ENCODE measurements at regions of chr17 and their contacts with region 1.

Region 1: GRCh38 chr17:7466639-7467341 is 12.6 kb downstream of the ZBTB4 start:
- DNase-seq: no peak
- H3K4me3 ChIP-seq: peak overlapping the region in 1 of 3 donors; percentile 20
- H3K27ac ChIP-seq: peak overlapping the region; percentile 67 to 89
- H3K4me1 ChIP-seq: no peaks in the 10 kb centered on the region
- H3K27me3 ChIP-seq: no peaks in the 10 kb centered on the region
- CTCF ChIP-seq: no peak
- POLR2A ChIP-seq: no peak

Region 2: GRCh38 chr17:7493941-7494340 is 27.2 kb after region 1 on chr17:
- intact Hi-C with region 1: loop called (anchors 1 kb)
- DNase-seq: no peak
- H3K4me3 ChIP-seq: no peak overlapping the region
- H3K27ac ChIP-seq: no peak overlapping the region
- H3K4me1 ChIP-seq: peaks cover 2 to 4% of the 10 kb centered on the region in 2 donors
- H3K27me3 ChIP-seq: no peaks in the 10 kb centered on the region
- CTCF ChIP-seq: no peak
- POLR2A ChIP-seq: no peak

Region 3: DNA sequence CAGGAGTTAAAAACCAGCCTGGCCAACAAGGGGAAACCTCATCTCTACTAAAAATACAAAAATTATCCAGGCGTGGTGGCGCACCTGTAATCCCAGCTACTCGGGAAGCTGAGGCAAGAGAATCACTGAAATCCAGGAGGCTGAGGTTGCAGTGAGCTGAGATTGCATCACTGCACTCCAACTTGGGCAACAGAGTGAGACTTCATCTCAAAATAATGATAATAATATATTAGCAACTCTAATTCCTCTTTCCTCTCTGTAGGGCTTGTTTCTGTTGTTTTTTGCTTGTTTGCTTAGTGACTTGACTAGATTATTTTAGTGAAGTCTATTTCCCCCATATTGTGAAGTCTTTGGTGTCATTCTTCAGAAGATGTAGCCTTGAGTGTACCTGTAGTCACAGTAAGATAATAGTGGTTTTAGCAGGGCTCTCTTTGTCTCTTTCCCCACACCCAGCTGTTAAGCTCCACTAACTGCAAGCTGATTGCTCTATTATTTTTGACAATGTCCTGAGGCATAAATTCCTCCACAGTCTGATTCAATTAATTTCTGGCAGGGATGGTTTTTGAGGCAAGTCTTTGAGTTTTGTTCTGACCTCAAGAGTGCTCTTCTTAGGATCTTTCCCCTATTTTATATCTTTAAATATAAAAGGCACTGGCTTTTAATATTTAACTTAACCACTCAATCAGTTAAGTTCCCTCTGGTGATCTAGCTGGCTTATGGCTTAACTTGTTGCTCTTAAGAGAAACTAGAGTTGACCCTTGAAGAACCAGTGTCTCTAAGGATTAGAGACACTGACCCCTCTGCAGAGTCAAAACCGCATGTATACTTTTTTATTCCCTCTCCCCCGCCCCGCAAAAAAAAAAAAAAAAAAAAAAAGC is 63.5 kb after region 1 on chr17:
- intact Hi-C with region 1: no loop called
- DNase-seq: no peak
- H3K4me3 ChIP-seq: no peak overlapping the region
- H3K27ac ChIP-seq: no peak overlapping the region
- H3K4me1 ChIP-seq: no peaks in the 10 kb centered on the region
- H3K27me3 ChIP-seq: no peaks in the 10 kb centered on the region
- CTCF ChIP-seq: no peak
- POLR2A ChIP-seq: no peak